ENCODE measurements at regions of chr16 and their contacts with region 1.

Region 1: GRCh38 chr16:28069971-28070794 is 6.7 kb upstream of the GSG1L start:
- DNase-seq: no peak
- H3K4me3 ChIP-seq: no peak overlapping the region
- H3K27me3 ChIP-seq: peaks cover 14% of the 10 kb centered on the region
- CTCF ChIP-seq: no peak

Region 2: GRCh38 chr16:27639561-27640276 is 430.5 kb before region 1 on chr16:
- CTCF ChIA-PET with region 1: interaction called, 19 read pairs
- POLR2A ChIA-PET with region 1: no interaction called
- DNase-seq: no peak
- H3K4me3 ChIP-seq: no peak overlapping the region
- H3K27me3 ChIP-seq: no peaks in the 10 kb centered on the region
- CTCF ChIP-seq: peak; percentile 81

Region 3: GRCh38 chr16:27924411-27925090 is 145.6 kb before region 1 on chr16:
- CTCF ChIA-PET with region 1: no interaction called
- POLR2A ChIA-PET with region 1: no interaction called
- DNase-seq: no peak
- H3K4me3 ChIP-seq: no peak overlapping the region
- H3K27me3 ChIP-seq: no peaks in the 10 kb centered on the region; the same call in 1 of the 2 replicates
- CTCF ChIP-seq: no peak

Region 4: DNA sequence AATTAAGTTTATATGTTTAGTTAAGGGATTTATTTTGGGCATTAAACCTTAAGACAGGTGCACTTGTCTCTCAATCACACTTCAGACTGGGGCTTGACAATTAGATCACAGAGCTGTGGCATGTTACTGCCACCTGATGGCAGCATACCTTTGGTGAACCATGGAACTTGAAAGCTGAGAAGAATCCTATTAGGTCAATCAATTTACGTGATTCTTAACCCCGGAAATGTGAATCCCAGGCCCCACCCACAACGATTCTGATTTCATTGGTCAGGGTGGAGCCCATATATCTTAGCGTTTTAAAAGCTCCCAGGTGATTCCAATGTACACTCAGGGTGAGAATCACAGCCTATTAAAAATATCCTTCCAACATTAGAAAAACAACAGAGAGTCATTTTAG is 97.7 kb before region 1 on chr16:
- CTCF ChIA-PET with region 1: interaction called, 24 read pairs
- POLR2A ChIA-PET with region 1: no interaction called
- DNase-seq: no peak
- H3K4me3 ChIP-seq: no peak overlapping the region
- H3K27me3 ChIP-seq: peaks cover 1% of the 10 kb centered on the region
- CTCF ChIP-seq: peak; percentile 43

Region 5: GRCh38 chr16:27984121-27984520 is 86.1 kb before region 1 on chr16:
- CTCF ChIA-PET with region 1: no interaction called
- POLR2A ChIA-PET with region 1: no interaction called
- DNase-seq: no peak
- H3K4me3 ChIP-seq: no peak overlapping the region
- H3K27me3 ChIP-seq: no peaks in the 10 kb centered on the region; the same call in 1 of the 2 replicates
- CTCF ChIP-seq: no peak

Region 6: GRCh38 chr16:28082624-28083023 is 12.4 kb after region 1 on chr16:
- CTCF ChIA-PET with region 1: interaction called, 37 read pairs
- POLR2A ChIA-PET with region 1: no interaction called
- DNase-seq: no peak
- H3K4me3 ChIP-seq: no peak overlapping the region
- H3K27me3 ChIP-seq: no peaks in the 10 kb centered on the region
- CTCF ChIP-seq: no peak

Region 7: GRCh38 chr16:28090646-28091377 is 20.6 kb after region 1 on chr16:
- CTCF ChIA-PET with region 1: interaction called, 15 read pairs
- POLR2A ChIA-PET with region 1: no interaction called
- DNase-seq: no peak
- H3K4me3 ChIP-seq: no peak overlapping the region
- H3K27me3 ChIP-seq: no peaks in the 10 kb centered on the region
- CTCF ChIP-seq: no peak

Region 8: DNA sequence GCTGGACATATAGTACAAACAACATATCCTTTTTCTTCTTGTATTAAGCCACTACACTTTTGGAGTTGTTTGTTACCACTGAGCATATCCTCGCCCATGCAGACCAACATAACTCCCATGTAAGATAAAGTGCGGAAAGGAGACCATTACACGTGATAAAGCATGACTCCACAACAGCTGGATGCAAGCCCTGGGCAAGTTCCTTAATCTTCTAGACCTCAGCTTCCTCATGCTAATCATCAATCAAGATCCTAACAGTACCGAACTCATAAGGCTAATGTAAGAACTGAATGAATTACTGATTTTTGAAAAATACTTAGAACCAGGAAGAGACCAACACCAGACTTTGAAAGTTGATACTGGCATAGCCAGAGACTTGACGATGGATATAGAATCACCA is 40.3 kb after region 1 on chr16:
- CTCF ChIA-PET with region 1: no interaction called
- POLR2A ChIA-PET with region 1: no interaction called
- DNase-seq: no peak
- H3K4me3 ChIP-seq: no peak overlapping the region
- H3K27me3 ChIP-seq: no peaks in the 10 kb centered on the region
- CTCF ChIP-seq: no peak

Region 9: DNA sequence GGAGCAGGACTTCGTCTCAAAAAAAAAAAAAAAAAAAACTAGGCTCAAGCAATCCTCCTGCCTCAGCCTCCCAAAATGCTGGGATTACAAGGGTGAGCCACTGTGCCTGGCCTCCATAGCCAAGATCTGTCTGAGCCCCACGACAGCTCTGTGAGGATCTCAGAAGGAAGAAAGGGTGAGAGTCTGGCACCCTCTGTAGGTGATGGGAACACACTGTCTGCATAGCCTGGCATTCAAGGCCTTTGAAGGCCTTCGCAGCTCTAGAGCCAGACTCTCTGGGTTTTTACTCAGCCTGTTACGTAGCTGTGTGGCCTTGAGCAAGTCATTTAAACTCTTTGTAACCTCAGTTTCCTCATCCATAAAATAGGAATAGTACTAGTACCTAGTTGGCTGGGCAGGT is 147.9 kb after region 1 on chr16:
- CTCF ChIA-PET with region 1: interaction called, 17 read pairs
- POLR2A ChIA-PET with region 1: no interaction called
- DNase-seq: no peak
- H3K4me3 ChIP-seq: no peak overlapping the region
- H3K27me3 ChIP-seq: no peaks in the 10 kb centered on the region
- CTCF ChIP-seq: peak; percentile 76